Adrenal gland (tissue), 19 donors: ENCODE measurements at regions of chr10 and their contacts with region 1.

Region 1: DNA sequence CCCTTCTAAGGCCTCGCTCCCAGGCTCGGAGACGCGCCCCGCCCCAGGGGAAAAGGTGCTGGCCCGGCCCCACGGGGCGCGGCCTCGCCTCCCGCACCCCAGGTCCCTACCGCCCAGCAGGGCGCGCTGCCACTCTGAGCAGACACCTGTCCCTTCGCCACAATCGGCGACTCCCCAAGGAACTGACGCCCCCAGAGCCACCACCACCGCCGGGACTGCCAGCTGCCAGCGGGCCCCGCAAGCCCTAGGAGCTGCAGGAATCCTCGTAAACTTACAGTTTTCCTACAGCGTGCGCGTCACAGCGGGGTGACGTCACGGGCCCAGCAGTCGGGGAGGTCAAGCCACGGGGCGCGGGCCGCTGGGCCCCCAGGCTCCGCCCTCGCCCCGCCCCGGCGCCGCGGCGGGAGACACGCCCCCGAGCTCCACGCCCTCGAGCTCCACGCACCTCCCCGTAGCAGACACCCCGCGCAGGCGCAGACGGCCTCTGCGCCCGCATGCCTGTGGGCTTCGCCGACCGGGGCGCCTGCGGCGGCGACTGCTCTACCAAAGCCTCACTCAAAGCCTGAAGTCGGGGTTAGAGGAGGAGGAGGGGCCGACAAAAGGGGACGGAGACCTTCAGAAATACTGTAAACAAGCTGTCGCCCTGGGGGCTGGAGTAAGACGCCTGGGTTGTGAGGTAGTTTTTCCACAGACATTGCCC is at the start of gene ZNF438:
- DNase-seq: peak; percentile 95 to 97 (median 96)
- H3K4me3 ChIP-seq: peak within 1 kb of the TSS in 2 of 4 donors; percentile 52 to 77
- H3K27ac ChIP-seq: peak within 1 kb of the TSS; percentile 94 to 99 (median 96)
- H3K4me1 ChIP-seq: peaks cover 0 to 24% of the 10 kb centered on the region in 2 donors
- H3K27me3 ChIP-seq: no peaks in the 10 kb centered on the region
- CTCF ChIP-seq: peak; percentile 21 to 71 (median 63)
- POLR2A ChIP-seq: peak; percentile 67 to 82
- total RNA-seq, gene ZNF438: 3.4 to 8.3 (median 5.6) TPM

Region 2: GRCh38 chr10:30784897-30785605 is 246.7 kb before region 1 on chr10:
- intact Hi-C with region 1: loop called in 1 of 2 experiments (anchors 5 kb)
- DNase-seq: peak; percentile 74 to 94 (median 86)
- H3K4me3 ChIP-seq: peak overlapping the region; percentile 35 to 95 (median 73)
- H3K27ac ChIP-seq: peak overlapping the region; percentile 67 to 95 (median 84)
- H3K4me1 ChIP-seq: peaks cover 9% of the 10 kb centered on the region in 2 donors
- H3K27me3 ChIP-seq: no peaks in the 10 kb centered on the region
- CTCF ChIP-seq: peak in 1 of 6 experiments; percentile 27
- POLR2A ChIP-seq: peak in 1 of 2 donors; percentile 43

Region 3: DNA sequence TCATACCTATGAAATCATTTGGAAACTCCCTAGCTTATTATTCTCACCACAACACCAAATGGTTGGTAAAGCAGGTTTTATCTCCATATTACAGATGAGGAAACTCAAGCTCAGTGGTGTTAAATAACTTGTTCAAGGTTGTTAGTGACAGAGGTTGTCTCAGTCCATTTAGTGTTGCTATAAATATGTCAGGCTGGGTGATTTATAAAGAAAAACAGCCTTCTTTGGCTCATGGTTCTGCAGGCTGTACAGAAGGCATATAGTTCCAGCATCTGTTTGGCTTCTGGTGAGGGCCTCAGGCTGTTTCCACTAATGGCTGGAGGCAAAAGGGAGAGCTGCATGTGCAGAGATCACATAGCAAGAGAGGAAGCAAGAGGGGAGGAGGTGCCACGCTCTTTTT is 96.6 kb before region 1 on chr10:
- intact Hi-C with region 1: no loop called
- DNase-seq: no peak
- H3K4me3 ChIP-seq: no peak overlapping the region
- H3K27ac ChIP-seq: no peak overlapping the region
- H3K4me1 ChIP-seq: no peaks in the 10 kb centered on the region
- H3K27me3 ChIP-seq: no peaks in the 10 kb centered on the region
- CTCF ChIP-seq: no peak
- POLR2A ChIP-seq: no peak

Region 4: GRCh38 chr10:31090894-31091607 is 59.3 kb after region 1 on chr10:
- intact Hi-C with region 1: no loop called
- DNase-seq: no peak
- H3K4me3 ChIP-seq: no peak overlapping the region
- H3K27ac ChIP-seq: no peak overlapping the region
- H3K4me1 ChIP-seq: no peaks in the 10 kb centered on the region
- H3K27me3 ChIP-seq: no peaks in the 10 kb centered on the region
- CTCF ChIP-seq: no peak
- POLR2A ChIP-seq: no peak